CD8-positive, alpha-beta T cell (primary cell): ENCODE measurements at regions of chr5 and their contacts with region 1.

Region 1: DNA sequence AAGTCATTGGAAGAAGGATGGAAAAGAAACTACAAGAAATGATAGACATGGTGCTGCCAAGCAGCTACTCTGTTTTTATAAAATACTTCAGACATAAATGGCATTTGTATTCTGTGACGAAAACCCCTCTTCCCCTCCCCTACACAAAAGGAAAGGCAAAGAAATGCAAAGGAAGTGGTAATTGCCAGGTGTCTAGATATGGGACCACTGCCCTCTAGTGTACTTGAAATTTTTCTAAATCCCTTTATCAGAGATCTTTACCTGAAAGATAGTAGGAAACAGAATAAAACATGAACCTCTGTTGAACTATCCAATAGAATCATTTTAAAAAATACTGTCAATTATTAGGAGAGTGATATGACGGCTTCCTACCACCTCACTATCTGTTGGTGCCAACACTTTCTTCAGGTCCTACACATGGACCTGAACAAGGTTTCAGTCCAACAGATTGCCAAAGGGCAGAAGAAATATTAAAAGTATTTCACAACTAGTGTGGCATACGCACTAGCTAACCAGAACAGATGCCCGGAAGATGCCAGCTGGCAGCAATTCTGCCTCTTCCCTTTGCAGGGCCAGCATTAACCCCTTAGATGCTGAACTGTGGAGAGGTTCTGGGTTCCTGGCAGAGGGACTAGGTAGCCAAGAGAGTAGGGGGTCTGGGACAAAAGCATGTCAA is 104.1 kb downstream of the TSSK1B start:
- DNase-seq: peak in 3 of 9 experiments; percentile 9 to 81 (median 66)
- ATAC-seq: peak; percentile 83
- H3K4me3 ChIP-seq: no peak overlapping the region
- H3K4me3 Mint-ChIP-seq: peak overlapping the region; percentile 35
- H3K27ac ChIP-seq: no peak overlapping the region
- H3K27ac Mint-ChIP-seq: peak overlapping the region; percentile 12
- H3K4me1 ChIP-seq: peaks cover 7% of the 10 kb centered on the region
- H3K4me1 Mint-ChIP-seq: peaks cover 19% of the 10 kb centered on the region
- H3K27me3 ChIP-seq: no peaks in the 10 kb centered on the region
- H3K27me3 Mint-ChIP-seq: peaks cover 2% of the 10 kb centered on the region
- CTCF ChIP-seq: peak; percentile 58

Region 2: DNA sequence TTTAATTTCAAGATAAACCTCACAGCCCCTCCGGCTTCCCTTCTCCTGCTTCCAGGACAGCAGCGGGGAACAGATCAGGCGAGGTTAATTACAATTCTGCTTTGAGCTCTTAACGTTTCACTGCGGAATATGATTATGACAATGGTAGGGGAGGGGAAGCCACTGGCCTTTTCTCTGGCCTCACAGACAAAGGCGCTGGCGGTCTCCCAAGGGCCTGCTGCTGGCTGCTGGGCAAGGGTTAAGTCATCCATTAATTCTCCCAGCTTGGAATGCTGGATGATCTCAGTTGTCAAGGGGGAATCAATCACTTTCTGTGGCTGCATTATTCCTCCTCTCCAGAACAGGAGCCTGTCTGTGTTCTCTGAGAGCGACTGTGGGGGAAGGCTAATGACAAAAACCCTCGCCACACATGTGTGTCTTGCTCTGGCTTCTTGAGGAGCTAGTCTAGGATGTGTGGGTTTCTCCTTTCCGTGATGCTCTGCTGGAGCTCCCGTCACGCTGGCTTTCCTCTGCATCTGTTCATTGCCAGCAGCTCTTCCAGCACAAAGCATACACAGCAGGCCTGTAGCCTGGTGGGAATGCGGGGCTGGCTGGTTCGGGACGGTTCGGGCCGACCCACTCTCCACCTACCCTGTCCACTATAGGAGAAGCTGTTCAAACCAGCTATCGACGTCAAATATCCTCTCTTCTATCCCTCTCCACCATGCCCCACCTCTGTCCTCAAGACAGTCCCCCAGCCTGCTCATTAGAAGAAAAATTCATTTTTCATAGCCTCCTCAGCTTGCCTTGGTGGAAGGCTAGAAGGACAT is 271.2 kb before region 1 on chr5:
- CTCF ChIA-PET with region 1: interaction called, 29 read pairs
- POLR2A ChIA-PET with region 1: no interaction called
- intact Hi-C with region 1: loop called (anchors 1 to 5 kb)
- DNase-seq: peak in 1 of 9 experiments; percentile 42
- ATAC-seq: no peak
- H3K4me3 ChIP-seq: no peak overlapping the region
- H3K4me3 Mint-ChIP-seq: peak overlapping the region; percentile 33
- H3K27ac ChIP-seq: no peak overlapping the region
- H3K27ac Mint-ChIP-seq: peak overlapping the region; percentile 78
- H3K4me1 ChIP-seq: peaks cover 48% of the 10 kb centered on the region
- H3K4me1 Mint-ChIP-seq: peaks cover 70% of the 10 kb centered on the region
- H3K27me3 ChIP-seq: no peaks in the 10 kb centered on the region
- H3K27me3 Mint-ChIP-seq: no peaks in the 10 kb centered on the region
- CTCF ChIP-seq: no peak

Region 3: DNA sequence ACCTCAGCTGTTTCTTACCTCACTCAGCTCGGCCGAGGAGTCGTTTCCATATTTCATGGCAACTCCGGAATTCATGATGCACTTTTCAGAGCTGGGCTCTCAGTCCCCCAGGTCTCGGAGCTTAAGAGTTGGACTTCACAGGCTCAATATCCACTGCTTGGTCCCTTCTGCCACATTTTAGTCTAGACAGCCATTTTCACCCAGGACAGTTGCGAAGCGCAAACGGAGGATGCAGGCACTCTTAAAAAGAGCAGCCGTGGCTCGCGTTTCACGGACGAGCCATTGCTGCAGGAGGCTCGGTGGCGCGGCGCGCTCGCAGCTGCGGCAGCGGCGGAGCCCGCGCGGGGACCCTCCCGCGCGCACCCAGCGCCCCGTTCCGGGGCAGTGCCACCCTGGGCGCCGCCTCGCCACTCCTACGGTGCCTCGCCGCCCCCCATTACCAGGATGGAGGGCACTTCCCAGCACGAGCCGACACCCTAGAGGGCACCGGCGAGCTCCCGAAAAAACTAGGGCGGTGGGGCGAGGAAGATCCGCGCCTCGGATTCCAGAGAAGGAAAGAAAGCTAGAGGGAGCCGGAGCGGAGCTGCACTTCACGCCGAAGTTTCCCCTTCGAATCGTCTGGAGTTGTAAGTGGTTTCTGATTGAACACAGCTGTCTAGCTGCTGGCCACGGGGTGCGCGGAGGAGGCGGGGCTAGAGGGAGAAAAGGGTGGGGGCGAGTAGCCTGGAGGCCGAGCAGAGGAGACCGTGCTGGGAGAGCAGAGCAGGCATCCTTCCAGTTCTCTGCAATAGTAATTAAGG is 36.2 kb before region 1 on chr5:
- CTCF ChIA-PET with region 1: interaction called, 7 read pairs
- POLR2A ChIA-PET with region 1: no interaction called
- intact Hi-C with region 1: loop called in 1 of 2 experiments (anchors 2 kb)
- DNase-seq: peak; percentile 56 to 84 (median 75)
- ATAC-seq: peak; percentile 91
- H3K4me3 ChIP-seq: peak overlapping the region; percentile 70 to 76
- H3K4me3 Mint-ChIP-seq: peak overlapping the region; percentile 94
- H3K27ac ChIP-seq: peak overlapping the region; percentile 20 to 46
- H3K27ac Mint-ChIP-seq: peak overlapping the region; percentile 75
- H3K4me1 ChIP-seq: peaks cover 17% of the 10 kb centered on the region
- H3K4me1 Mint-ChIP-seq: peaks cover 34% of the 10 kb centered on the region
- H3K27me3 ChIP-seq: peaks cover 0 to 9% of the 10 kb centered on the region in 2 experiments
- H3K27me3 Mint-ChIP-seq: peaks cover 16% of the 10 kb centered on the region
- CTCF ChIP-seq: no peak

Region 4: GRCh38 chr5:113378959-113379541 is 48.4 kb after region 1 on chr5:
- CTCF ChIA-PET with region 1: interaction called, 14 read pairs
- POLR2A ChIA-PET with region 1: no interaction called
- intact Hi-C with region 1: no loop called
- DNase-seq: peak; percentile 7 to 72 (median 52)
- ATAC-seq: peak; percentile 64
- H3K4me3 ChIP-seq: no peak overlapping the region
- H3K4me3 Mint-ChIP-seq: peak overlapping the region; percentile 27
- H3K27ac ChIP-seq: no peak overlapping the region
- H3K27ac Mint-ChIP-seq: no peak overlapping the region
- H3K4me1 ChIP-seq: peaks cover 29% of the 10 kb centered on the region
- H3K4me1 Mint-ChIP-seq: peaks cover 46% of the 10 kb centered on the region
- H3K27me3 ChIP-seq: no peaks in the 10 kb centered on the region
- H3K27me3 Mint-ChIP-seq: peaks cover 16% of the 10 kb centered on the region
- CTCF ChIP-seq: peak; percentile 76

Region 5: DNA sequence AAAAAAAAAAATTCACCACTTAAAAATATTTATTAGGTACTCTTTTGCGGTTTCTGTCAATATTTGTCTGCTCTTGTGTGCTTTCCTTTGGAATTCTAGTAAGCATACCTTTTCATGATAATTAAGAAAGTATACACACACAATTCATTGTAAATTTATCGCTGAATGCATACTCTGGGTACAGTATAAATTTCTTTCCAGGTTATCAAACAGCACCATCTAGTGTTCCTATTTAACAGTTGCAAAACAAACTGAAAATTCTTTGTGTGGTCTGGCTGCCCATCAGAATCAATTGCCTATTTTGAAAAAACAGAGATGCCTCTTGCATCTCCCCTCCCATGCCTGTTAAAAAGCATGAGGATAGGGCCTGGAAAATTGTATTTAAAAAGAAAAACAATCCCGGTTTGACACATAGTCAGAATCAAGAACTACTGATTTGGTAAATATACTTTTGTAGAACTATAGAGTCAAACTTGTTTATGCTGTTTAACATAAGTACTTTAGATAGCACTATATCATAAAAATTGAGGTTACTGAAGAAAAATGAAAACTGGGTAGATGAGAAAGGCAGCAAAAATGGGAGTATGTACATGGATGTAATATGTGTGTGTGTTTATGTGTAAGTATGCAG is 1915.8 kb after region 1 on chr5:
- CTCF ChIA-PET with region 1: no interaction called
- POLR2A ChIA-PET with region 1: no interaction called
- intact Hi-C with region 1: loop called in 1 of 2 experiments (anchors 10 kb)
- DNase-seq: peak in 2 of 9 experiments; percentile 44 to 60
- ATAC-seq: peak; percentile 63
- H3K4me3 ChIP-seq: no peak overlapping the region
- H3K4me3 Mint-ChIP-seq: no peak overlapping the region
- H3K27ac ChIP-seq: no peak overlapping the region
- H3K27ac Mint-ChIP-seq: no peak overlapping the region
- H3K4me1 ChIP-seq: no peaks in the 10 kb centered on the region
- H3K4me1 Mint-ChIP-seq: peaks cover 18% of the 10 kb centered on the region
- H3K27me3 ChIP-seq: no peaks in the 10 kb centered on the region
- H3K27me3 Mint-ChIP-seq: no peaks in the 10 kb centered on the region
- CTCF ChIP-seq: peak; percentile 87